A673 (cell line): ENCODE measurements at regions of chr5 and their contacts with region 1.

Region 1: DNA sequence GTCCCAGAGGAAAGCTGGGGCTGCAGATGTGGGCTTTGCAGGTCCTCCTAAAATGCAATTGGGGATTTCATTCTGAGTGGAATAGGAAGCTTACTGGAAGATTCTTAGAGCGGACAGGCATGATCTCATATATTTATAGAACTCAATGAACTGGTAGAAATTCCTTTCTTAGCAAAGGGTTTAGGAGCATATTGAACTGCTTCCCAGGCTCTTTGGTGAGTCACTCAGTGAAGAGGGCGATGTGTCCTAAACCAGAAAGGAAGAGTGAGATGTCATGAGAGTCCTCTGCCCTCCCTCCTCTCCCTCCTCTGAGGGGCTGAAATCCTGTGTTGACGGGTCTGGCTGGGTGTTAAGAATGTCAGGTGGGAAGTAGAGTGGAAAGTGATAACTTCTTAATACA is 26.3 kb upstream of the SEMA6A start:
- DNase-seq: no peak
- H3K4me3 ChIP-seq: no peak overlapping the region
- H3K27ac ChIP-seq: no peak overlapping the region
- H3K4me1 ChIP-seq: peaks cover 11% of the 10 kb centered on the region
- H3K27me3 ChIP-seq: no peaks in the 10 kb centered on the region
- CTCF ChIP-seq: no peak

Region 2: GRCh38 chr5:115774684-115775083 is 826.2 kb before region 1 on chr5:
- CTCF ChIA-PET with region 1: no interaction called
- POLR2A ChIA-PET with region 1: no interaction called
- intact Hi-C with region 1: no loop called
- DNase-seq: no peak
- H3K4me3 ChIP-seq: no peak overlapping the region
- H3K27ac ChIP-seq: no peak overlapping the region
- H3K4me1 ChIP-seq: no peaks in the 10 kb centered on the region
- H3K27me3 ChIP-seq: peaks cover 7% of the 10 kb centered on the region
- CTCF ChIP-seq: no peak

Region 3: DNA sequence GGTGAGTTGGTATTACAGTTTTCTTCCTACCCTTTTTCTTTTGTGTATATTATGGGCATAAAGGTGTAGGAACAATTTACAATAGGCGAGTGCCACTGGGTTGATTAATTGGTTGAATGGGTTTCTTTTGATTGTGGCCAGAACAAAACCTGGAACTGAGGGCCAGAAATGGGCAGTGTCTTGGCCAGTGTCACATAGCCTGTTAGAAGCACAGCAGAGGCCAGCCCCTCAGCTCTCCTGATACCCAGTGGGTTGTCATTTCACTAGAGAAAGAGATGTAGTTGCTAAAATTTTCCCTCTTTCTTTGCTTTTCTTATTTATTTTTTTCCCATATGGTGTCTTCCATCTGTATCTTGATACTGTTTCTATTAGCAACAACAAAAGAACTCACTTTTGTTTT is 12.6 kb after region 1 on chr5:
- CTCF ChIA-PET with region 1: no interaction called
- POLR2A ChIA-PET with region 1: no interaction called
- intact Hi-C with region 1: no loop called
- DNase-seq: no peak
- H3K4me3 ChIP-seq: no peak overlapping the region
- H3K27ac ChIP-seq: no peak overlapping the region
- H3K4me1 ChIP-seq: peaks cover 17% of the 10 kb centered on the region
- H3K27me3 ChIP-seq: no peaks in the 10 kb centered on the region
- CTCF ChIP-seq: no peak

Region 4: GRCh38 chr5:116750631-116751580 is 150.0 kb after region 1 on chr5:
- CTCF ChIA-PET with region 1: interaction called, 10 read pairs
- POLR2A ChIA-PET with region 1: no interaction called
- intact Hi-C with region 1: no loop called
- DNase-seq: no peak
- H3K4me3 ChIP-seq: no peak overlapping the region
- H3K27ac ChIP-seq: no peak overlapping the region
- H3K4me1 ChIP-seq: no peaks in the 10 kb centered on the region
- H3K27me3 ChIP-seq: no peaks in the 10 kb centered on the region
- CTCF ChIP-seq: no peak